ENCODE measurements at regions of chr18 and their contacts with region 1.

Region 1: GRCh38 chr18:3281456-3282400 is 19.8 kb downstream of the MYL12B start:
- DNase-seq: no peak
- ATAC-seq: peak; percentile 87

Region 2: DNA sequence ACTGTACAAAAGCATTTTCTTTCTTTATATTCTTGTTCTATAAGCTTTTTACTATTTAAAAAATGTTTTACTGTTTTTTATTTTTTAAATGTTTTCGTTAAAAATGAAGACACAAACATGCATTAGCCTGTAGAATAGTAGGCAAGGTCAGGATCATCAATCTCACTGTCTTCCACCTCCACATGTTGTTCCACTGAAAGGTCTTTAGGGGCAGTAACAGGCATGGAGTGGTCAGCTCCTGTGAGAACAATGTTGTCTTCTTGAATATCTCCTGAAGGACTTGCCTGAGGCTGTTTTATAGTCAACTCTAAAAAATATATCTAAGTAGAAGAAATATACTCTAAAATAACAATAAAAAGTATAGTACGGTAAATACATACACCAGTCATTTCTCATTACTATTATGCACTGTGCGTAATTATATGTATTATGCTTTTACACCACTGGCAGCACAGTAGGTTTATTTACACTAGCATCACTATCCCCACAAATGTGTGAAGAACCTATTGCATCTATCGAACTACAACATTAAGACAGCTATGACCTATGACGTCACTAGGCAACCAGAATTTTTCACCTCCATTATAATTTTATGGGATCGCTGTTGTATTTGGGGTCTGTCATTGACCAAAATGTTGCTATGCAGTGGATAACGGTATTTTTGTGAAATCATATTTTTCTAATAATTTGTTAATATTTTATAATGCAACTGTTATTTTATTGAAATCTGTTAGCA is 1474.7 kb before region 1 on chr18:
- intact Hi-C with region 1: no loop called
- DNase-seq: no peak
- ATAC-seq: no peak

Region 3: DNA sequence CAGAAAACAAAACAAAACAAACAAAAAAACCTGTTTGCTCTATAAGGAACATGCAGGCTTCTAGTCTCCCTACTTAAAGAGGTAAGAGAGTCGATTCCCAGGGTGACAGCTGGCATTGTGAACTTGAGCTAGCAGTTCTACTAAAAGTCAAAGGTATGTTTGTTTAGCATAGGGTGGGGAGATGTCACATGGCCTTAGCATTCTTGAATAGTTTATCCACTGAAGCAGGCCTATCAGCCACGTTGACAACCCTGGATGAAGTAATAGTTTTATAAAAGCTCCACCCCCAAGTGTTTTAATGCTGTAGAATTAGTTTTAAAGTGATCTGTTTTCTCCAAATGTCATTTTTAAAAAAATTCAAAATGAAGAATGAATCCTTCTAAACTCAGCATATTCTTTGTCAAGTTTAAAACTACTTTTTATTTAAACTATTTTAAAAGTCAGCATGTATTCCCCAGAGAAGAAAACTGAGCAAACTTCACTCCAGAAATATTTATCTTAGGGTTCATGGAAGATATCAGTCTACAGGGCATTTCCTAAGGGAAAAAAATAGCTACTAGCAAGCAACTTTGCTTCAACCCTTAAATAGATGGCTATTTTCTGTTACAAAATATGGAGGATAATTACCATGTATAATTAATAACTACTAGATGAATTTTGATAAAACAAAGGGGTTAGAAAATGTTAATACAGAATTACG is 63.6 kb before region 1 on chr18:
- intact Hi-C with region 1: no loop called
- DNase-seq: no peak
- ATAC-seq: peak; percentile 58

Region 4: GRCh38 chr18:3321133-3321812 is 39.5 kb after region 1 on chr18:
- intact Hi-C with region 1: loop called (anchors 5 kb)
- DNase-seq: no peak
- ATAC-seq: no peak

Region 5: DNA sequence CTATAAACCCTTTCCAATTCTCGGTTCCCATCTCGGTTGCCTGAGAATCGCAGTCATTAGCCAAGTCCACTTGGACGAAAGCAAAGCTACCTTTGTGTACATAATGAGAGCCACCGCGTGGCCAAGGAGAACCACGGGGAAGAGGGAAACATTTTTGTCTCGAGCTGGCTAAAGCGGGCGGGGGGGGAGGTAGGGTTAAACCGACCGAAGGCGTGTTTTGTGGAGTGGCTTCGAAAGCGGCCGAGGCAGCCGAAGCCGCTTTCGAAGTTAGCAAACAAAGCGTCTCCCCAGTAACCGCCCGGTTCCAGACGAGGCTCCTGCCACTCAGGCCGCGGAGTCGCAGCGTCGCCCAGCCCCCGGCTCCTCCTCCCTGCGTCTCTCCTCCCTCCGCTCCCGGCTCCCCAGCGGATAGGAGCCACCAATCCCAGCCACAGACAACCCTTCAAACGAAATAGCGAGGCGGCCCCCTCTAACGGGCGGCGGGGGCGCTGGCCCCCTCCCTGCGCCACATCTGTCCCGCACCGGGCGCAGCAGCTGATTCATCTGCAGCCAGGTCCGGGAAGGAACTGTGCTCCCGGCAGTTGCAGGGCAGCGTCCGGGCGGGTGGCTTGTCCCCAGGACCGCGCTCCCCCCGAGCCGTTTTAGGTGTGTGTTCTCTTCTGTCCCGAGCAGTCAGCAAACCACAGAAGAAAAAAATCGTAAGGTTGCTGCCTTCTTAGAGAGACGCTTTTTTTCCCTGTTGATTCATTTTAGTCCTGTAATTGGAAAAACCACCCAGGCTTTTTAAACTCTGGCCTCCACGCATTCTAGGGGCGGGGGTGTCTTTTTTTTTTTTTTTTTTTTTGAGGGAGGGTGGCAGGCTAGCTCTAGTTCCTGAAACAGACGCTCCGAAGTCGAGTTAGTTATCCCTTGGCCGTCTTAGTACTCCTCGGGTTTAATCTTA is 166.4 kb after region 1 on chr18:
- intact Hi-C with region 1: loop called (anchors 2 kb)
- DNase-seq: peak; percentile 96
- ATAC-seq: peak; percentile 86

Region 6: DNA sequence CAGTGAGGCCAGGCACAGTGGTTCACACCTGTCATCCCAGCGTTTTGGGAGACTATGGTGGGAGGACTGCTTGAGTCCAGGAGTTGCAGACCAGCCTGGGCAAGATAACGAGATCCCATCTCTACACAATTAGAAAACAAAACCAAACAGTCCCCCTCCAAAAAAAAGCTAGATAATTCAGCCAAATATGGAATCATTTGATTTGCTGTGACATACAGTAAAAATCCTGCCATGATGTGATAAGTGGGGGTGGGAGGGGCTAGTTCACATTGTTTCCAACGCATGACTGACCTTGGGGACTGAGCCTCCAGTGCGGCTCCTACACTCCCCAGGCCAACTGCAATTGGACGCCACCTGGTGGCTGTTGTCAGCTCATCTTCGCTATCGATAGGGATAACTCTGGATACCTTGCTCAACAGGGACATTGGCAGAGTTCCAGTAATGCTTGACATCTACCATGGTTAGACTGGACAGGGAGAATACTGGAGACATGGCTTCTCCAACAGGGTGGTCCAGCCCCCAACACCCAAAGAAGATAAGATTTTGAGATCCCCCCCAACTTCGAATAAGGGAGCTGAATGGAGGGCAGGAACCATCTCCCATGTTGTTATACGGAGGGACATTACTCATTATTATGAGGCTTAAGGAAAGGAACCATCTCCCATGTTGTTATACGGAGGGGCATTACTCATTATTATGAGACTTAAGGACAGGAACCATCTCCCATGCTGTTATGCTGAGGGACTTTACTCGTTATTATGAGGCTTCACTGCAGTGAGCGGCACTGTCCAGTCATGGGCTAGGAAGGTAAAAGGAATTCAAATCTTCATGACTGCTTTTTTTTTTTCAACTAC is 304.2 kb after region 1 on chr18:
- intact Hi-C with region 1: loop called (anchors 2 kb)
- DNase-seq: peak; percentile 85
- ATAC-seq: peak; percentile 80

Region 7: GRCh38 chr18:3665780-3666525 is 384.2 kb after region 1 on chr18:
- intact Hi-C with region 1: loop called (anchors 1 kb)
- DNase-seq: peak; percentile 76
- ATAC-seq: peak; percentile 92

Region 8: DNA sequence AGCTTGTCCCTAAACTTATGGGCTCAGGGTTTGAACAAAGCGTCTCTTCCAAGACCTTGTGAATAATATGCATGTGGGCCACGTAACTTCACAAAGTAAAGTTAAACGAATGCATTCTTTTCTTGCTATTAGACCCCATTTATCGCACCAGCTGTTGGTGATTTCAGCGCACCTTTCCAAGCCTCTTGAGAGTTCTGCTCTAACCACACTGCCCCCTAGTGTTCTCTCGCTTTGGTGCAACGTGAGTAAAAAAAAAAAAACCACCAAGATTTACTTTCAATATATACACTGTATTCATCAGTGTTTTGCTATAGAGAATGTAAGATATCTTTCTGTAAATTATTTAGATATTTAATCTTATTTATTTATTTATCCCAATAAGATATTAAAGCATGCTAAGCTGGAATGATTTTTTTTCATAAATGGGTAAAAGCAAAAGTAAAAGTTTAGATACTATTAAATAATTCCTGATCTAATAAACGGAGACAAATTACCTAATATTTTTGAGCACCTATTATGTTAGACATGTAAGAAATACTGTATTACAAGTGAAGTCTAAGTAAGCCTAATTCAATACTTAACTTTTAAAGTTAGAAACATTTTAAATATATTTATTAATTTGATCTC is 713.9 kb after region 1 on chr18:
- intact Hi-C with region 1: loop called (anchors 5 kb)
- DNase-seq: no peak
- ATAC-seq: peak; percentile 31